ENCODE measurements at regions of chr11 and their contacts with region 1.

Region 1: DNA sequence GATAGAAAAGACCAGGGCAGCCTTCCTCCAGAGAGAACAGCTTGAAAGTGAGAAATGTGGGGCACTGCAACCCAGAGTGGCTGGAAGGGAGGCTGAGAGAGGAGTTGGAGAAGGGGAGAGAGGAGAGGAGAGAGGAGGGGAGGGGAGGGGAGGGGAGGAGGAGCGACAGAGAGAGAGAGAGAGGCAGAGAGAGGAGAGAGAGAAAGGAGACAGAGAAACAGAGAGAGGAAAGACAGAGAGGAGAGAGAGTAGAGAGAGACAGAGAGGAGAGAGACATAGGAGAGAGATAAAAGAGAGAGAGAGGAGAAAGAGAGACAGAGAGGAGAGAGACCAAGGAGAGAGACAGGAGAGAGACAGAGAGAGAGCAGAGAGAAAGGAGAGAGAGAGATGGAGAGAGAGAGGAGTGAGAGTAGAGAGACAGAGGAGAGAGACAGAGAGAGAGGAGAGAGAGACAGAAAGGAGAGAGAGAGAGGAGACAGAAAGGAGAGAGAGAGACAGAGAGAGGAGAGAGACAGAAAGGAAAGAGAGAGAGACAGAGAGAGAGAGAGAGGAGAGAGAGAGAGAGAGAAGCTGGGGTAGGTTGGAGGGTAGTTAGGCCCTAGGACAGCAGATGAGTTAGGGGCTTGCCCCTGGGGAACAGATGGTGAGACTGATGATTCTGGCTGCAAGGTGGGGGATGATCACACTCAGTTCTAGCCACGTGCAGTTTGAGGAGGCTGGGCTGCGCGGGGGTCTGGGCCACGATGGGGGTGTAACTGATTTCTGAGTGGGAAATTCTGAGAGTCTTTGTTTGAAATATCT is 8.5 kb upstream of the SCYL1 start:
- ATAC-seq: no peak
- H3K4me3 ChIP-seq: no peak overlapping the region
- H3K27ac ChIP-seq: no peak overlapping the region
- H3K4me1 ChIP-seq: no peaks in the 10 kb centered on the region

Region 2: GRCh38 chr11:65440831-65441499 is 75.4 kb before region 1 on chr11:
- in situ Hi-C with region 1: loop called in 1 of 9 experiments (anchors 10 kb)
- ATAC-seq: no peak
- H3K4me3 ChIP-seq: no peak overlapping the region
- H3K27ac ChIP-seq: no peak overlapping the region
- H3K4me1 ChIP-seq: peaks cover 0 to 10% of the 10 kb centered on the region in 2 donors

Region 3: DNA sequence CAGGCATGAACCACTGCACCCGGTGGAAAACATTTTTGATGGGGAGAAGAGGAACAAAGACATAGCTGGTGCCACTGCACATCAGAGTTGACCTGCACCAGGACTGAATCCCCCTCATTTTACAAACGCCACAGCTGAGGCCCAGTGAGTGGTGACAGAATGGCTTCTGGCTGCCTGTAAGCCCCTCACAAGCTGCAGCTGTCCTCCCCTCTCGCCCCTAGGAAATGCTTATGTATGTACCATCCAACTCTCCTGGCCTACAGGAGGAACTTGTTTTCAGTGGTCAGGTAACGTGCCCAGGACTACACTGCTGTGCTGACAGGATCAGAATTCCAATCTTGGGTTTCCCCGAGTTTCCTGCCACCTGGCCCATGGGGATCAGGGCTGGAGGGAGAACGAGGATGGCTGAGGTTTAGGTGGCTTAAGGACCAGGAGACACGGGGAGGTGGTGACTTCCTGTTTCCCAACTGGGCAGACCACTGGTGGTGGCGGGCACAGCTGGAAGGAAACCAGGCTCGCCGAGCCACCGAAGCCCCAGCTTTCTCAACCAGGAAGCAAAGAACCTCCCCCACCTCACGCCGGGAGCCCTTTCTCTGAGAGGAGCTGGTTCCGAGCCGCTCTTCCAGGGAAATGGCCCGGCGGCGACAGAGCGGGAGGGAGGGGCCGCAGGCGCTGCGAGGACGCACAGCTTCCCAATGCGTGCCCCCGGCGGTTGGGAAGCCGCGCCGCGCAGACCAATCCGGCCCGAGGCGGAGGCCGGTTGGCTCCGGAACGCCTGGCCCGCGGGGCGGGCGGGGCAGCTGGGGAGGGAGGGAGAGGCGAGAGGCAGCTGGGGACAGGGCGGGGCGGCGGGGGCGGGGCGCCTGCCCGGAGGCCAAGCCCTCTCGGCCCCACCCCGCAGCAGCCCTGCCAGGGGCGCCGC is 1339.5 kb after region 1 on chr11:
- in situ Hi-C with region 1: no loop called
- ATAC-seq: peak; percentile 69 to 88 (median 84)
- H3K4me3 ChIP-seq: peak overlapping the region; percentile 47 to 54 (median 51)
- H3K27ac ChIP-seq: peak overlapping the region; percentile 72 to 84
- H3K4me1 ChIP-seq: peaks cover 10 to 12% of the 10 kb centered on the region in 2 donors

Measured in motor neuron (in vitro differentiated cells).